HEK293 (cell line): ENCODE measurements at regions of chr13 and their contacts with region 1.

Region 1: DNA sequence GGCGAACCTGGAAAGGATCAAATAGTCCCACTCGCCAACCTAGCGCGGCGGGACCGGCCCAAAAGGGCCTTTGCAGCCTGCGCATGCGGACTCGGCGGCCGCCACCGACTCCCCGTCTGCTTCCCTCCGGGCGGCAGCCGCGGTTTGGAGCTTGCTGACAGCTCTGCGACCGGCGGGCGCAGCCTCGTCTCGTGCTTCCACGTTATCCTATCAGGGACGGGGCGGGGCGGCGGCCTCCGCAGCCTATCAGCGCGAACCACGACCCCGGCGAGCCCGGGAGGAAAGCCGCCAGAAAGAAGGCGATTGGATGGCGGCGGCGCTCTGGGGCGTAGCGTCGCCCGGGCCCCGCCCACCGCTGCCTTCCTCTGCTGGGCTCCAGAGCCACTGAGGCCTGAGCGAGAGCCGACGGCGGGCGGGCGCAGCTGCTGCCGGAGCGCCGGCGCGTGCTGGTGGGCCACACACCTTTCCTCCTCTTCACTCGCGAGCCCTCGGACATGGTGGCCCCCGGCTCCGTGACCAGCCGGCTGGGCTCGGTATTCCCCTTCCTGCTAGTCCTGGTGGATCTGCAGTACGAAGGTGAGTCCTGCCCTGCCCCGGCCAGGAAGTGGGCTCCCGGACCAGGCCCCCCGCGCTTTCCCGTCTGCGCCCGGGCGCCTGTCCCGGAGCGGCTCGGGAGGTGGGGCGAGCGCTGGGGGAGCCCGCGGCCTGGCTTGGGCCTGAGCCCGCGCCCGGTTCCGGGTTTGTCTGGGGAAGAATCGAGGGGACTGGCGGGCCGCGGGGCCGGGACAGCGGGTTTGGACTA is at the start of gene DNAJC3:
- H3K4me3 ChIP-seq: peak within 1 kb of the TSS; percentile 89
- H3K27ac ChIP-seq: peak within 1 kb of the TSS; percentile 89
- H3K4me1 ChIP-seq: no peaks in the 10 kb centered on the region
- CTCF ChIP-seq: no peak

Region 2: GRCh38 chr13:95643936-95644598 is 32.9 kb before region 1 on chr13:
- CTCF ChIA-PET with region 1: no interaction called
- POLR2A ChIA-PET with region 1: interaction called, 19 read pairs
- H3K4me3 ChIP-seq: peak overlapping the region; percentile 63
- H3K27ac ChIP-seq: peak overlapping the region; percentile 82; the same call in 1 of the 2 replicates
- H3K4me1 ChIP-seq: no peaks in the 10 kb centered on the region
- CTCF ChIP-seq: no peak

Region 3: DNA sequence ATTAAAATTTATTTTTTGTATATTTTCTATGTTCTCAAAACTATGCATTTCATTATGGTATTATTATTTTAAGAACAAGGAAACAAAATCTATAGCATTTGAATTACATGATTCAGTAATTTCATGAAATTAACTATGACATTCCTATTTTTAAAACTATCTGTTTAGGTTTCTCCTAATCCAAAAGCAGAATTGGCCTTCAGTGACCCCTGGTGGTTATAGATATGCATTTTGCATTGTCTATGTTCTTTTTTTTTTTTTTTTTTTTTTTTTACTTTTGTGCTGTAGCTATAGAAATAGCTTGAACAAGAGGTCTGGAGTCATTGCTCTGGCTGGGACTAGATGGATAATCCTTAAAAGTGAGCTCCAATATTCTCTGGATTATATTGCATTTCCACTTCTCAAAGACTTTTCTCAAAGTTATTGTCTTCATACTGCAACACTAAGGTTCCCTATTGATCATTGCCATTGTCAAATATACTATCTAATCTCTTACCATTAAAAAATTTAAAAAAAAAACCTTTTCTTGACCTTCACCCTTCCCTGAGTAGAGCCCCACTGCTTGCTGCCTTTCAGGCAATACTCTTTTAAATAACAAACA is 15.9 kb before region 1 on chr13:
- CTCF ChIA-PET with region 1: interaction called, 3 read pairs
- POLR2A ChIA-PET with region 1: interaction called, 11 read pairs
- H3K4me3 ChIP-seq: no peak overlapping the region
- H3K27ac ChIP-seq: no peak overlapping the region
- H3K4me1 ChIP-seq: no peaks in the 10 kb centered on the region
- CTCF ChIP-seq: no peak

Region 4: GRCh38 chr13:95858286-95859075 is 181.5 kb after region 1 on chr13:
- CTCF ChIA-PET with region 1: no interaction called
- POLR2A ChIA-PET with region 1: no interaction called
- H3K4me3 ChIP-seq: no peak overlapping the region
- H3K27ac ChIP-seq: no peak overlapping the region
- H3K4me1 ChIP-seq: peaks cover 6% of the 10 kb centered on the region
- CTCF ChIP-seq: no peak